Caco-2 (cell line): ENCODE measurements at regions of chr7 and their contacts with region 1.

Region 1: DNA sequence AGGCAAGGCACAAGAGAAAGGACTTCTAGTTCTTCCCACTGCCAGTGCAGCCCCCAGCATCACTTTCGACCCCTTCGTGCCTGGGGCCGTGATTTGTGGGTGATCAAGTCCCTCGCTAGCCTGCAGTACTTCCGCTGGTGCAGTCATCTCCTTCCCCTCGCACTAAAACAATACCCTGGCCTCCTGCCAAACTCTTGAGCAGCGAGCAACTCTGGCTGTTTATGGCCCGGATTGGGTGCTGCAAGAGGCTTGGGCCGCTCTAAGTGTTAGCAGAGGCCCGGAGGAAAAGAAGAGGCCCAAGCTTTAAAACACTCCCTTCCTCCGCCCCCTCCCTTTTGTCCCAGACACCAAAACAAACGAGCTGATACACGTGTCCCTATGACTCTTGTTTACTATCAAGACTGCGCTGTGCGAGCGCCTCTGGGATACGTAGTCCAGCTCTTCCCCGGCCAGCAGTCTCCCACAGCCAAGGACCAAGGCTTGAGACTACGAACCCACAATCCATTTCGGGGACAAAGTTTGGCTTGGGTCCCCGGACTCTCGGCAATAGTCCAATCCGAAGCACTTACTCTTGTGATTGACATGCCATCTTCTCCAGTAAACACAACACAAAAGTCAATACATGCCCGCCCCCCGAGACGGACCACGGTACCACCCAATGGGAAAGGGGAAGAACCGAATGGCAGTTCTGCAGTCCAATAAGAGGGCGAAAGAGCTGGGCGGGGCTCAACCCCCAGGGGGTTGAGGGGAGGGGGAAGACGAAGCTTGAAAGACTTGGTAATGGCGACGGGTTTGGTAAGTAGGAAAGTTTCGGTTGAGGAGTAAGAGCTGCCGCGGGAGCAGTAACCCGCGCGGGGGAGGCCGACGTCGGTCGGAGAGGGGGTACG is at the start of gene HBP1:
- DNase-seq: peak; percentile 98 to 99
- H3K4me3 ChIP-seq: peak within 1 kb of the TSS; percentile 92
- H3K4me3 Mint-ChIP-seq: peak within 1 kb of the TSS; percentile 85
- H3K27ac Mint-ChIP-seq: peak within 1 kb of the TSS; percentile 93
- H3K4me1 ChIP-seq: no peaks in the 10 kb centered on the region
- H3K4me1 Mint-ChIP-seq: peaks cover 6% of the 10 kb centered on the region
- H3K27me3 ChIP-seq: no peaks in the 10 kb centered on the region
- H3K27me3 Mint-ChIP-seq: no peaks in the 10 kb centered on the region
- CTCF ChIP-seq: no peak
- total RNA-seq, gene HBP1: 24.2 and 25.5 TPM in 2 replicates

Region 2: GRCh38 chr7:106927536-106927935 is 240.9 kb before region 1 on chr7:
- CTCF ChIA-PET with region 1: interaction called, 10 read pairs
- POLR2A ChIA-PET with region 1: no interaction called
- intact Hi-C with region 1: no loop called
- DNase-seq: no peak
- H3K4me3 ChIP-seq: no peak overlapping the region
- H3K4me3 Mint-ChIP-seq: no peak overlapping the region
- H3K27ac Mint-ChIP-seq: no peak overlapping the region
- H3K4me1 ChIP-seq: no peaks in the 10 kb centered on the region
- H3K4me1 Mint-ChIP-seq: no peaks in the 10 kb centered on the region
- H3K27me3 ChIP-seq: no peaks in the 10 kb centered on the region
- H3K27me3 Mint-ChIP-seq: peaks cover 6% of the 10 kb centered on the region
- CTCF ChIP-seq: no peak

Region 3: DNA sequence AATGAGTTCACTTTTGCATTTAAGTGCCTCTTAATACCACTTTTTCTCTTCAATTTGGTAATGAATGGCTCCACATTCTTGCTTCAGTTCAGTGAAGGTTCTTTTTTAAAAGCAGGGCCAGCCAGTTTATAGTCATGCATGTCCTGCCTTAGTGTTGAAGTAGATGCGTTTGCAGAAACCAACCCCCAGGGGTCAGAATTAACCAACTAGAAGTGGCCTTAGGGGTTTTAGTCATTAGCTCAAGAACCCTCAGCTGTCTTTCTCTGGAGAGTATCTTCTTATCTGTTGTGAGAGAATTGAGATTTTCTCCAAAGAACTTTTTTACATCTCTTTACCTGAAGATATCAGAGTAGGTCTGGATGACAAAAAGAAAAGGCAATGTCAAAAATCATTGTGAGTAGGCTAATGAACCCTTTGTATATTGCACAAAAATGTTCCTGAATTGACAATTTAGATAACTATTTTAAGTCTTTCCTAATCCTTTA is 221.2 kb before region 1 on chr7:
- CTCF ChIA-PET with region 1: interaction called, 6 read pairs
- POLR2A ChIA-PET with region 1: no interaction called
- intact Hi-C with region 1: loop called (anchors 1 kb)
- DNase-seq: peak; percentile 50 to 62
- H3K4me3 ChIP-seq: no peak overlapping the region
- H3K4me3 Mint-ChIP-seq: no peak overlapping the region
- H3K27ac Mint-ChIP-seq: no peak overlapping the region
- H3K4me1 ChIP-seq: no peaks in the 10 kb centered on the region
- H3K4me1 Mint-ChIP-seq: no peaks in the 10 kb centered on the region
- H3K27me3 ChIP-seq: no peaks in the 10 kb centered on the region
- H3K27me3 Mint-ChIP-seq: peaks cover 23% of the 10 kb centered on the region
- CTCF ChIP-seq: peak; percentile 61 to 65

Region 4: DNA sequence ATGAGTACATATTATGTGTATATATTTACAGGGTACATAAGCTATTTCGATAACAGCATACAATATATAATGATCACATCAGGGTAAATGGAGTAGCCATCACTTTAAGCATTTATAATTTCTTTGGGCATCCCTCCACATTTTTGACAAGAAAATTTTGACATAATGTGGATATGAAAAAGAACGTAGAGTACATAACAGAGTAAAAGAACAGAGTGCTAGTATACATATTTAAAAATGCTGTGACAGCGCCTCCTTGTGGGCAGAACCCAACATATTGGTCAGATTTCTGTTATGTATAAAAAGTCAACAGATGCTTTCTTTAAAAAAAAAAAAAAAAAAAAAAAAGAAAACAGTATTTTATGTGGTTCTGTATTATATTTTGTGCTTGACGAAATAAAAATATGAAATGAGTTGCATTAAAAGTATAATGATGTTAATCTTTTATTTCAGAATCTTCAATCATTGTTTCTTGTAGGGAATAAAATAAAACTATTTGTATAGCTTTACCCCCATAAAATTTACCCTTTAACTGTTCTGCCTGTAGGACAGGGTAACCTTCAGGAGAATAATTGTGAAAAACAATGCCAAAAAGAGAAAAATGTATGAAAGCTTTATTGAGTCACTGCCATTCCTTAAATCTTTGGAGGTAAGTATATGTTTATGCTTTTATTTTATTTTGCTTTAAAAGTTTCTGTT is 18.0 kb before region 1 on chr7:
- CTCF ChIA-PET with region 1: interaction called, 12 read pairs
- POLR2A ChIA-PET with region 1: interaction called, 7 read pairs
- intact Hi-C with region 1: loop called (anchors 1 kb)
- DNase-seq: peak; percentile 53 to 63
- H3K4me3 ChIP-seq: no peak overlapping the region
- H3K4me3 Mint-ChIP-seq: no peak overlapping the region
- H3K27ac Mint-ChIP-seq: no peak overlapping the region
- H3K4me1 ChIP-seq: no peaks in the 10 kb centered on the region
- H3K4me1 Mint-ChIP-seq: peaks cover 7% of the 10 kb centered on the region
- H3K27me3 ChIP-seq: no peaks in the 10 kb centered on the region
- H3K27me3 Mint-ChIP-seq: no peaks in the 10 kb centered on the region
- CTCF ChIP-seq: peak; percentile 62 to 81

Region 5: GRCh38 chr7:107208024-107208521 is 39.6 kb after region 1 on chr7:
- CTCF ChIA-PET with region 1: no interaction called
- POLR2A ChIA-PET with region 1: no interaction called
- intact Hi-C with region 1: no loop called
- DNase-seq: no peak
- H3K4me3 ChIP-seq: no peak overlapping the region
- H3K4me3 Mint-ChIP-seq: no peak overlapping the region
- H3K27ac Mint-ChIP-seq: no peak overlapping the region
- H3K4me1 ChIP-seq: no peaks in the 10 kb centered on the region
- H3K4me1 Mint-ChIP-seq: no peaks in the 10 kb centered on the region
- H3K27me3 ChIP-seq: no peaks in the 10 kb centered on the region
- H3K27me3 Mint-ChIP-seq: no peaks in the 10 kb centered on the region
- CTCF ChIP-seq: no peak

Region 6: GRCh38 chr7:107743567-107744344 is 575.3 kb after region 1 on chr7 and contains the start of gene CBLL1:
- CTCF ChIA-PET with region 1: interaction called, 4 read pairs
- POLR2A ChIA-PET with region 1: no interaction called
- intact Hi-C with region 1: loop called (anchors 1 kb)
- DNase-seq: peak; percentile 96 to 98
- H3K4me3 ChIP-seq: peak within 1 kb of the TSS; percentile 90
- H3K4me3 Mint-ChIP-seq: peak within 1 kb of the TSS; percentile 99
- H3K27ac Mint-ChIP-seq: peak within 1 kb of the TSS; percentile 98
- H3K4me1 ChIP-seq: peaks cover 10% of the 10 kb centered on the region
- H3K4me1 Mint-ChIP-seq: peaks cover 22% of the 10 kb centered on the region
- H3K27me3 ChIP-seq: no peaks in the 10 kb centered on the region
- H3K27me3 Mint-ChIP-seq: peaks cover 5% of the 10 kb centered on the region
- CTCF ChIP-seq: peak; percentile 47 to 87
- total RNA-seq, gene CBLL1: 35.9 and 39.1 TPM in 2 replicates